Lower leg skin (tissue), 4 donors: ENCODE measurements at regions of chr10 and their contacts with region 1.

Region 1: GRCh38 chr10:132387764-132388210 is 9.2 kb upstream of the PWWP2B start:
- DNase-seq: peak in 1 of 2 donors; percentile 93
- H3K4me3 ChIP-seq: no peak overlapping the region
- CTCF ChIP-seq: no peak
- POLR2A ChIP-seq: no peak

Region 2: DNA sequence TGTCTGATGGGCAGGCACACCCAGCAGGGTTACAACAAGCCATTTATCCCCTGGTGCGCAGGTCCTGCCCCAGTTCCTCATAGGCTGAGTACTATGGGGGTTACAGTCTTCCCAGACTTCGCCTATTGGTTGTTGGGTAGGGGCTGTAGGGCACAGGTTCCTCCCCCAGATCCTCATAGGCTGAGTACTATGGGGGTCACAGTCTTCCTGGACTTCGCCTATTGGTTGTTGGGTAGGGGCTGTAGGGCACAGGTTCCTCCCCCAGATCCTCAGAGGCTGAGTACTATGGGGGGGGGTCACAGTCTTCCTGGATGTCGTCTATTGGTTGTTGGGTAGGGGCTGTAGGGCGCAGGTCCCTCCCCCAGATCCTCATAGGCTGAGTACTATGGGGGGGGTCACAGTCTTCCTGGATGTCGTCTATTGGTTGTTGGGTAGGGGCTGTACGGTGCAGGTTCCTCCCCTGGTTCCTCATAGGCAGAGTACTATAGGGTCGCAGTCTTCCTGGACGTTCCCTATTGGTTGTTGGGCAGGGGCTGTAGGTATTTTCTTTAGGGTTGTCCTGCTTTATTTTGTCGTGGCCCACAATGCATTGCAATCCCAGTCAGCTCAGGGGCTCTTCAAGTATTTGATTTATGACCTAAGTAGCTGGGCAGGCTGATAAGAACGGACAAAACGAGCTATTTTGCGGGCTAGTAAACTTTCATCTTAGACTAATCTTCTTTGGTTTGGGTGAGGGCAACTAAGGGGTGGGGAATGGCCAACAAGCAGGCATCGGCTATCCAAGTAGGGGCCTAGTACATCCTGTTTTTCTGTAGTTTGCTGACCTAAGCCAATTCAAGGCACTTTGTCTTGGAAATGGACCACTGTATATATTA is 52.4 kb before region 1 on chr10:
- intact Hi-C with region 1: no loop called
- DNase-seq: peak in 1 of 2 donors; percentile 36
- H3K4me3 ChIP-seq: no peak overlapping the region
- CTCF ChIP-seq: no peak
- POLR2A ChIP-seq: no peak

Region 3: DNA sequence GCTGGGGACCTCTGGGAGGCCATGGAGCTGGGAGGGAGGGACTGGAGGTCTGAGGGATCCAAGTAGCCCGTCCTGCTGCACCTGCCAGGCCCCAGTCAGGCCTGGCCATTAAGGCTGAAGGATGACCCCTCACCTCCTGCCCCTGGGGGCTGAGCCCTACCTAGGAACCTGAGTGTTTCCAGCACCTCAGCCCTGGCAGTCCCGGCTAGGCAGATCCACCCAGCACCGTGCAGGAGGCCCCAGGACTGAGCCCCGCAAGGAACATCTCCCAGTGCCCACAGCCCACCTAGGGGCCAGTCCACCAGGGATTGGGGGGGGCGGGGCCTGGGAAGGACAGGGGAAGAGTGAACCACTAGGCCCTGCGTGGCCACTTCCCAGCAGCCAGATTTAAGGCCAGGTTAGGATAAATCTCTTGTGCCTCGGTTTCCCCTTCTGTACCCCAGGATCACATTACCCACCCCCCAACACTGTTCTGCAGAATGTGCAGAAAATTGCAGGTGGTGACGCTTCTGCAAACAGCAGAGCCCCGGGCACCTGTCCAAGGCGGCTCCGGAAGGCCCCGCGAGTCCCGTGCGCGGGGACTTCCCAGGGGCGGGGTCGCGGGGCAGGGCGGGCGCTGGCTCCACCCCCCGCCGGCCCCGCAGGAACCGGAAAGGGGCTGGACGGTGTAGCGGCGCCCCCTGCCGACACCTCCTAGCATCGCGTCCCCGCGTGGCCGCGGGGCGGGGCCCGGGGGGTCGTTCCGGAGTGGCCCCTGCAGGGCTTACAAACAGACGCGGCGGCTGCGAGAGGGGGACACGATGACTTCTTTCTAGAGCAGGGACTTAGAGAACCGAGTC is 65.1 kb after region 1 on chr10:
- intact Hi-C with region 1: loop called (anchors 2 kb)
- DNase-seq: peak; percentile 77 to 96
- H3K4me3 ChIP-seq: no peak overlapping the region
- CTCF ChIP-seq: peak in 2 of 3 donors; percentile 70 to 71
- POLR2A ChIP-seq: no peak